ENCODE measurements at regions of chr9 and their contacts with region 1.

Region 1: GRCh38 chr9:33813712-33814641 is 3.0 kb upstream of the UBE2R2 start:
- DNase-seq: no peak
- H3K4me3 ChIP-seq: no peak overlapping the region
- H3K27ac ChIP-seq: peak overlapping the region; percentile 41 to 48
- H3K4me1 ChIP-seq: no peaks in the 10 kb centered on the region
- H3K27me3 ChIP-seq: no peaks in the 10 kb centered on the region
- CTCF ChIP-seq: peak; percentile 61 to 76 (median 70)
- POLR2A ChIP-seq: peak in 1 of 2 donors; percentile 22

Region 2: DNA sequence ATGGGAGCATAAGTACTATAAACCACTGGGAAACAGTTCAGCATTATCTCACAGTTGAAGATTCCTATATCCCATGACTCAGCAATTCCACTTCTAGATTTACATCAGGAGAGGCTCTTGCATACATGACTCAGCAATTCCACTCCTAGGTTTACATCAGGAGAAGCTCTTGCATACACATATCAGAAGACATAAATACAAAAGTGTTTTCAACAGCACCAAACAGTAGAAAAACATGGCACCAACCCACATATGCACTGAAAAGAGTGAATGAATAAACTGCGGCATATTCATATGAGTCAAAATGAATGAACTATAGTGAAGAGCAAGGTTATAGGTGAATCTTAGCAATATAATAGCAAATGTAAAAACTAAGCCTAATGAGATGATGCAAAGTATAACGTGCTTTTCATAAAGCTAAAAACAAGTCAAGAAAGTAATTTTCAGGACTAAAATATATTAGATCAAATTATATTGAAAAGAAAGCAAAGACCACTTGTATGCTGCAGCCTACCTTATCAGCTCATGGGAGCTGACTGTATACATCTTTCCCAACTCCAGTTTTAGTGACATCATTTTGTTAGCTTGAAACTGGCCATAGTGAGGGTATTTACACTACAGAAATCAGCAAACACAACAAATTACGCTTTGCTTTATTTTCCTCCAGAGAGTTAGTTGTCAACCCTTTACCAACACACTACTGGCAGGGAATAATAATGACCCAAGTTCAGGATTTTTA is 194.1 kb before region 1 on chr9:
- intact Hi-C with region 1: no loop called
- DNase-seq: no peak
- H3K4me3 ChIP-seq: no peak overlapping the region
- H3K27ac ChIP-seq: no peak overlapping the region
- H3K4me1 ChIP-seq: no peaks in the 10 kb centered on the region
- H3K27me3 ChIP-seq: no peaks in the 10 kb centered on the region
- CTCF ChIP-seq: no peak
- POLR2A ChIP-seq: no peak

Region 3: DNA sequence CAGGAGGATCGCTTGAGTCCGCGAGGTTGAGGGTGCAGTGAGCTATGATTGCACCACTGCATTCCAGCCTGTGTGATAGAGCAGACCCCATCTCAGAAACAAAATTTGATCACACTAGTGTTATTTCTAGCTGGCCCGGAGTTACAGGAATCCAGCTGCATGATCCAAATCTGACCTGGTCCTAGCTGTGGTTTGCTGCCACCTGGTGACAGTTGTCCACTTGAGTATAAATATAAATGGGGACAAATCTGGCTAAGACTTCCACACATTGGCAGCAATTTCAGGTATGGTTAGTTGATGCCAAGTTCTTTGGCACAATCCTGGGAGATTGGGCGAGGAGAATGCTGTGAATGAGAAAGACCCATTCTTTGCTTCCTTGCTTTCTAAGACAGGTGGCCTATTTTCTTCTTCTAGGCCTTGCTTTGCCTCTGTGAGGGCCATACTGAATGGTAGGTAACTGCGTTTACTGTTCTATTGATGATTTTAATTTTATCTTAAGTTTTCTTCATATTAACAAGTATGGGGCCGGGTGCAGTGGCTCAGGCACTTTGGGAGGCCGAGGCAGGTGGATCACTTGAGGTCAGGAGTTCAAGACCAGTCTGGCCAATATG is 38.3 kb after region 1 on chr9:
- intact Hi-C with region 1: loop called (anchors 5 kb)
- DNase-seq: peak; percentile 49 to 59
- H3K4me3 ChIP-seq: no peak overlapping the region
- H3K27ac ChIP-seq: peak overlapping the region in 1 of 2 donors; percentile 27
- H3K4me1 ChIP-seq: peaks cover 12 to 13% of the 10 kb centered on the region in 2 donors
- H3K27me3 ChIP-seq: no peaks in the 10 kb centered on the region
- CTCF ChIP-seq: peak; percentile 43 to 67 (median 58)
- POLR2A ChIP-seq: no peak

Region 4: DNA sequence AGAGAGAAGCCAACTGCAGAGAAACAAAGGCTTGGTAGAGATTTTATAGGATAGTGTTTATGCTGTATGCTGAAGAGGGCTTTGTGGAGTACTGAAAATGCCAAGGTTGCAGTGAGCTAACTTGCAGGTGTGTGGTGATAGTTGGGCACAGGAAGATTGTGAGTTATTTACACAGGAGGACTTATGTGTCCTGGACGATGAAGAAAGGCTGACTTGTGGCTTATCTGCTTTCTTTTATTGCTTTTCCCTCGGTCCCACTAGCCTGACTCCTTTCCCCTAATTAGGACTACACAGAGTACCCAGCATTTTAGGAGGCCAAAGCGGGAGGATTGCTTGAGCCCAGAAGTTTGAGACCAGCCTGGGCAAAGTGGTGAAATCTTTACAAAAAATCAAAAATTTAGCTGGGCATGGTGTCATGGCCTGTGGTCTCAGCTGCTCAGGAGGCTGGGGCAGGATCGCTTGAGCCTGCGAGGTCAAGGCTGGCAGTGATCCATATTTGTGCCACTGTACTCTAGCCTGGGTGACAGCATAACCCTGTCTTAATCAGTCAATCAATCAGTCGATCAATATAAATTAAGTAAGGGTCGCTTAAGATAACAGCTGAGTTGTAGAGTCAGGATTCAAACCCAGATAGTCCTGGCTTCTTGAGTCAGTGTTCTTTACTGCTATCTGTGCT is 64.9 kb after region 1 on chr9:
- intact Hi-C with region 1: no loop called
- DNase-seq: no peak
- H3K4me3 ChIP-seq: no peak overlapping the region
- H3K27ac ChIP-seq: no peak overlapping the region
- H3K4me1 ChIP-seq: no peaks in the 10 kb centered on the region
- H3K27me3 ChIP-seq: no peaks in the 10 kb centered on the region
- CTCF ChIP-seq: no peak
- POLR2A ChIP-seq: no peak

Region 5: GRCh38 chr9:33952066-33952465 is 138.1 kb after region 1 on chr9:
- intact Hi-C with region 1: no loop called
- DNase-seq: no peak
- H3K4me3 ChIP-seq: no peak overlapping the region
- H3K27ac ChIP-seq: no peak overlapping the region
- H3K4me1 ChIP-seq: no peaks in the 10 kb centered on the region
- H3K27me3 ChIP-seq: no peaks in the 10 kb centered on the region
- CTCF ChIP-seq: no peak
- POLR2A ChIP-seq: no peak